ENCODE measurements at regions of chr11 and their contacts with region 1.

Region 1: GRCh38 chr11:15101072-15101709 is 13.5 kb upstream of the INSC start:
- DNase-seq: peak; percentile 57
- ATAC-seq: peak; percentile 97
- H3K4me3 ChIP-seq: no peak overlapping the region
- H3K27ac ChIP-seq: no peak overlapping the region
- H3K4me1 ChIP-seq: peaks cover 5 to 14% of the 10 kb centered on the region in 2 experiments
- H3K27me3 ChIP-seq: no peaks in the 10 kb centered on the region; the same call in 1 of the 2 replicates
- CTCF ChIP-seq: peak; percentile 92 to 95 (median 93)
- POLR2A ChIP-seq: no peak
- RAD21 ChIP-seq: peak; percentile 96

Region 2: DNA sequence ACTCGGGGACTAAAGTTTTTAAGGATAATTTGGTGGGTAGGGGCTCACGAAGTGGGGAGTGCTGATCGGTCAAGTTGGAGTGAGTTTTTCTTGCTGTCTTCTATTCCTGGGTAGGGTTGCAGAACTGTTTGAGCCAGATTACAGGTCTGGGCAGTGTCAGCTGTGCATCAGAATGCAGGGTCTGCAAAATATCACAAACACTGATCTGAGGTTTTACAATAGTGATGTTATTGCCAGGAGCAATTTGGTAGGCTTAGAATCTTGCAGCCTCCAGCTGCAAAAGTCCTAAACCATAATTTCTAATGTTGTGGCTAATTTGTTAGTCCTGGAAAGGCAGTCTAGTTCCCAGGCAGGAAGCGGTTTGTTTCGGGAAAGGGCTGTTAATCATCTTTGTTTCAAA is 89.4 kb before region 1 on chr11:
- CTCF ChIA-PET with region 1: no interaction called
- POLR2A ChIA-PET with region 1: no interaction called
- RAD21 ChIA-PET with region 1: no interaction called
- intact Hi-C with region 1: no loop called
- DNase-seq: no peak
- ATAC-seq: no peak
- H3K4me3 ChIP-seq: no peak overlapping the region
- H3K27ac ChIP-seq: no peak overlapping the region
- H3K4me1 ChIP-seq: no peaks in the 10 kb centered on the region
- H3K27me3 ChIP-seq: no peaks in the 10 kb centered on the region
- CTCF ChIP-seq: no peak
- POLR2A ChIP-seq: no peak
- RAD21 ChIP-seq: no peak

Region 3: DNA sequence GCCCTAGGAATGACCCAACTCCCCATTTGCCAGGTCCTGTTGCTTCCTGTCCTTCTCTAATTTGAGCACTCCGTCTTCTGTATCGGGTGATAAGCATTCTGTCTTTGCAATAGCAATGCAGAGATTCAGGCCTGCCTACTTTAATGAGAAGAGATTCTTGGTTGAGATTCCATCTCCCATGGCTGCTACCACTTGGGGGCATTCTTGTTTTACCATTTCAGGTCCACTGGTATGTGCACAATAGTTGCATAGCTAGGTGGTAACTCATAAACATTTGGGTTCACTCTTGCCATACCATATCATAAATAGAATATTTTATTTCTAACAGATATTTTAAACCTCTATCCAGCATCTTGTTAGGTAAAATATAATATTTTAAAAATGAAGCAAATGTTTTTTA is 62.2 kb before region 1 on chr11:
- CTCF ChIA-PET with region 1: interaction called, 13 read pairs
- POLR2A ChIA-PET with region 1: no interaction called
- RAD21 ChIA-PET with region 1: no interaction called
- intact Hi-C with region 1: no loop called
- DNase-seq: peak; percentile 31
- ATAC-seq: peak; percentile 58; the same call in 1 of the 2 replicates
- H3K4me3 ChIP-seq: no peak overlapping the region
- H3K27ac ChIP-seq: no peak overlapping the region
- H3K4me1 ChIP-seq: peaks cover 0 to 9% of the 10 kb centered on the region in 2 experiments; a peak in 2 of 4 replicates
- H3K27me3 ChIP-seq: no peaks in the 10 kb centered on the region
- CTCF ChIP-seq: peak; percentile 27 to 84 (median 40); a peak in 4 of 6 replicates
- POLR2A ChIP-seq: no peak
- RAD21 ChIP-seq: peak; percentile 91

Region 4: GRCh38 chr11:15159085-15159484 is 57.9 kb after region 1 on chr11:
- CTCF ChIA-PET with region 1: interaction called, 24 read pairs
- POLR2A ChIA-PET with region 1: no interaction called
- RAD21 ChIA-PET with region 1: interaction called, 5 to 9 read pairs
- intact Hi-C with region 1: loop called (anchors 1 kb)
- DNase-seq: peak; percentile 28
- ATAC-seq: peak; percentile 95
- H3K4me3 ChIP-seq: no peak overlapping the region
- H3K27ac ChIP-seq: no peak overlapping the region
- H3K4me1 ChIP-seq: peaks cover 0 to 15% of the 10 kb centered on the region in 2 experiments; a peak in 1 of 4 replicates
- H3K27me3 ChIP-seq: no peaks in the 10 kb centered on the region
- CTCF ChIP-seq: peak; percentile 73 to 86 (median 78)
- POLR2A ChIP-seq: no peak
- RAD21 ChIP-seq: peak; percentile 84